ENCODE measurements at regions of chr2 and their contacts with region 1.

Region 1: DNA sequence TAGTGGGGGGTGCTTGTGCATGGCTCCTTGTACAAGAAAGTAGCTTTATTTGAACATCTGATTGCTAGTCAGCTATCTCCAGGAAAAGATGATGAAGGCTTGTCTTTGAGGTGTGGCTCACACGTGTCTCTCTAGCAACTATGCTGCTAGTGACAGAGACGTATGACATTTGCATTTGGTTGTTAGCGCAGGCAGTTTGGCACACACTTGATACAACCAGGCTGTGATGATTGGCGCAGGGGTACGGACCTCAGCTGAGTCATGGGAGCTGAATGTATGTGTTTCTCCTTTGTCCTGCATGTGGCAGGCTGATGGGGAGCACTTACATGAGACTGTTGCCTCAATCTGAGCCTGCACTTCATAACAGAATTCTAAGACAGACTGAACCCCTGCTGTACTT is 29.6 kb downstream of the PTCD3 start:
- DNase-seq: no peak
- H3K4me3 ChIP-seq: no peak overlapping the region
- H3K27ac ChIP-seq: no peak overlapping the region
- H3K4me1 ChIP-seq: no peaks in the 10 kb centered on the region
- H3K27me3 ChIP-seq: no peaks in the 10 kb centered on the region
- CTCF ChIP-seq: no peak
- EP300 ChIP-seq: no peak
- POLR2A ChIP-seq: no peak
- RAD21 ChIP-seq: no peak

Region 2: GRCh38 chr2:86124683-86125082 is 11.0 kb before region 1 on chr2:
- CTCF ChIA-PET with region 1: interaction called, 5 read pairs
- POLR2A ChIA-PET with region 1: interaction called, 23 read pairs
- DNase-seq: no peak
- H3K4me3 ChIP-seq: no peak overlapping the region
- H3K27ac ChIP-seq: no peak overlapping the region
- H3K4me1 ChIP-seq: no peaks in the 10 kb centered on the region
- H3K27me3 ChIP-seq: no peaks in the 10 kb centered on the region
- CTCF ChIP-seq: no peak
- EP300 ChIP-seq: no peak
- POLR2A ChIP-seq: no peak
- RAD21 ChIP-seq: no peak

Measured in H1 (cell line).